ENCODE measurements at regions of chr12 and their contacts with region 1.

Region 1: DNA sequence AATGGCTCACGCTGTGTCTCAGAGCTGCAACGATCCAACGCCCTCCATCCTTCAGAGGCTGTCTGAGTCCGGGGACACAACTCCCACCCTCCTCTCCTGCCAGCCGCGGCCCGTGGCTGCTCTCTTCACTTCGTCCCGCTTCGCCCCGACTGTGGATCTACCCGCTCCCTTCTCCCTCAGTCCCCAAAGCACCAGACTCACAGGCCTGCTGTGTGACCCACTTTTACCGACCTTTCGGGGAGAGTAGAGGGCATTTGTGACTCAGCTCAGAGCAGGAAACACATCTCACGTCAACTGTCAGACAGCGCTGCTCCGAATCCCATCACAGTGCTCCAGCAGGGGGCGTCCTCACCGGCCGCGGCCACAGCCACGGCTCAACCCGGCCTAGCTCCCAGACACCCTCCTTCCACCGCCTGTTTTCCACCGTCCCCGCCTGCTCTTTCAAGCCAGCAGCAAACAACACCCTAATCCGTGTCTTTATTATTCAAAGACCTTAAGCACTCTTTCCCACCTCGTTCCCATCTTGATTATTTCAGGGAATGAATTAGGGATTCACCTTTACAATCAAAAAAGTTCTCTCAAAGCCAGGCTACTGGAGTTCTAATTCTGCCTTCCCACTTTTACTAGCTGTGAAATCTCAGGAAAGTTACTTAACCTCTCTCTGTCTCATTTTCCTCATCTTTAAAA is 5.0 kb upstream of the AQP2 start:
- DNase-seq: peak; percentile 93
- ATAC-seq: peak; percentile 99
- H3K4me3 Mint-ChIP-seq: peak overlapping the region; percentile 76
- H3K27ac Mint-ChIP-seq: peak overlapping the region; percentile 91
- H3K4me1 Mint-ChIP-seq: peaks cover 25% of the 10 kb centered on the region
- H3K27me3 Mint-ChIP-seq: no peaks in the 10 kb centered on the region
- CTCF ChIP-seq: peak; percentile 89

Region 2: GRCh38 chr12:49842519-49843352 is 102.8 kb before region 1 on chr12 and contains the start of gene BCDIN3D:
- CTCF ChIA-PET with region 1: interaction called, 10 read pairs
- POLR2A ChIA-PET with region 1: no interaction called
- intact Hi-C with region 1: no loop called
- DNase-seq: peak; percentile 95
- ATAC-seq: peak; percentile 90
- H3K4me3 Mint-ChIP-seq: peak within 1 kb of the TSS; percentile 94
- H3K27ac Mint-ChIP-seq: peak within 1 kb of the TSS; percentile 91
- H3K4me1 Mint-ChIP-seq: peaks cover 28% of the 10 kb centered on the region
- H3K27me3 Mint-ChIP-seq: no peaks in the 10 kb centered on the region
- CTCF ChIP-seq: no peak
- total RNA-seq, gene BCDIN3D: 5.0 to 5.3 TPM

Region 3: DNA sequence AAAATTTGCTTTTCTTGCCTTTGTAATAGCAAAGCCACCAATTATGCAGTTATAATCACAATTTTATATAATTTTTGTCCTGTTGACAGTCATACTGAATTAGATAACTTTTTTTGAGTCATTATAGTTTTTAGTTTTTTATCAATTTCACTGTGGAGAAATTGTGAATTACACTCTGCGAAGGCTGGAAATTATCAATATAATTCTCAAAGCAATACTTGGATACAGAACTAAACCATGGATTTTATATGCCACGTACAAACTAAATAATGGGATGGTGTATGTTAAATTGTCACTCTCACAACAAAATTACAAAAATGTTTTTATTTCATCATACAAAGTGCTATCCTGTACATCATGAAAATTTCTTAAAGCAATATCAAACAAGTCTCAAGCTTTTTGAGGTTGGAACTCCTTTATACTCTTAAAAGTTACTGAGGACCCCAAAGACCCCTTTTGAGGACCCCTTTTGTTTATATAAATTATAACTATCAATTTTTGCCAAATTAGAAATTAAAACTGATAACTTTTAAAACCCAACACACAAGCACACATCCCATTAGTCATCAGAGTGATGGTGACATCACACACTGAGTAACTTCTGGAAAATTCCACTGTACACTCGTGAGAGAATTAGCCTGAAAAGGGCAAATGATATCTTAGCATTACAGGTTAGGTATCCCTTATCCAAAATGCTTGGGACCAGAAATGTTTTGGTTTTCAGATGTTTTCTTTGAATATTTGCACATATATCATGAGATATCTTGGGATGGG is 14.8 kb before region 1 on chr12:
- CTCF ChIA-PET with region 1: interaction called, 34 read pairs
- POLR2A ChIA-PET with region 1: no interaction called
- intact Hi-C with region 1: no loop called
- DNase-seq: no peak
- ATAC-seq: peak; percentile 71
- H3K4me3 Mint-ChIP-seq: no peak overlapping the region
- H3K27ac Mint-ChIP-seq: no peak overlapping the region
- H3K4me1 Mint-ChIP-seq: peaks cover 7% of the 10 kb centered on the region
- H3K27me3 Mint-ChIP-seq: peaks cover 9% of the 10 kb centered on the region
- CTCF ChIP-seq: no peak

Region 4: GRCh38 chr12:49974231-49974675 is 28.7 kb after region 1 on chr12:
- CTCF ChIA-PET with region 1: interaction called, 128 read pairs
- POLR2A ChIA-PET with region 1: no interaction called
- intact Hi-C with region 1: no loop called
- DNase-seq: no peak
- ATAC-seq: no peak
- H3K4me3 Mint-ChIP-seq: no peak overlapping the region
- H3K27ac Mint-ChIP-seq: no peak overlapping the region
- H3K4me1 Mint-ChIP-seq: no peaks in the 10 kb centered on the region
- H3K27me3 Mint-ChIP-seq: no peaks in the 10 kb centered on the region
- CTCF ChIP-seq: no peak

Region 5: GRCh38 chr12:50038336-50038735 is 92.8 kb after region 1 on chr12:
- CTCF ChIA-PET with region 1: interaction called, 26 read pairs
- POLR2A ChIA-PET with region 1: interaction called, 3 read pairs
- intact Hi-C with region 1: no loop called
- DNase-seq: no peak
- ATAC-seq: no peak
- H3K4me3 Mint-ChIP-seq: no peak overlapping the region
- H3K27ac Mint-ChIP-seq: no peak overlapping the region
- H3K4me1 Mint-ChIP-seq: peaks cover 12% of the 10 kb centered on the region
- H3K27me3 Mint-ChIP-seq: peaks cover 9% of the 10 kb centered on the region
- CTCF ChIP-seq: no peak

Region 6: DNA sequence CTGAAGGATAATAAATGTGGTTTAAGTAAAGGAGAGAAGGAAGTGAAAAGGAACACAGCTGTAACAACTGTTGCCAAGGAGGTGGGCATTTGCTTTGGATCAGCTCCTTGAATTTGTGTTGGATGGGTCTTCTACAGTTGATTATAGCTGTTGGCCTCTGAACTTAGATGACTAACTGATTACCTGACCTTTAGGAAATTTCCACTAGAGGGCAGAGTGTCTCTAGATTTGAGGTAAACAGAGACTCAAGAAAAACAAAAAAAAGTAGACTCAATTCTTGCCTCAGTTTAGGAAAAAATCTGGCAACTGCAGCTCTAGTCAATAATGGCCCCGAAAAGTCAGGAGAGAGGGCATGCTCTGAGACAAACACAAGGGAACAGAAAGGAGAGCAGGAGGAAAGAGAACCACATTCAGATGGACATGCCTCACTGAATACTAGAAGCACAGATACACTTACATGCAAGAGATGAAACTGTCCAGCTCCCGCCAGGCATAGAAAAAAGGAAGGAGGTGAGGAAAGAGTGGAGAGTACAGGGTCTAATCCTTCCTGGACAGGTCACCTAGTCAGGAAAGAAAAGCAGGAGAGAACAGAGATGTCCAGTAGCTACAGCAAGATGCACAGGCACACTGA is 187.1 kb after region 1 on chr12:
- CTCF ChIA-PET with region 1: no interaction called
- POLR2A ChIA-PET with region 1: no interaction called
- intact Hi-C with region 1: no loop called
- DNase-seq: no peak
- ATAC-seq: peak; percentile 45
- H3K4me3 Mint-ChIP-seq: no peak overlapping the region
- H3K27ac Mint-ChIP-seq: peak overlapping the region; percentile 68
- H3K4me1 Mint-ChIP-seq: peaks cover 4% of the 10 kb centered on the region
- H3K27me3 Mint-ChIP-seq: no peaks in the 10 kb centered on the region
- CTCF ChIP-seq: peak; percentile 39

Measured in activated CD8-positive, alpha-beta T cell treated with anti-CD3 and anti-CD28 coated beads for 36 hours (primary cell).